Activated B cell treated with CpG ODN at 0.5 μM for 24 hours (primary cell): ENCODE measurements at regions of chr1 and their contacts with region 1.

Region 1: GRCh38 chr1:28736450-28737306 is at the start of gene YTHDF2:
- DNase-seq: peak; percentile 96
- ATAC-seq: peak; percentile 93
- H3K4me3 Mint-ChIP-seq: peak within 1 kb of the TSS; percentile 96
- H3K27ac Mint-ChIP-seq: peak within 1 kb of the TSS; percentile 91
- H3K4me1 Mint-ChIP-seq: peaks cover 30% of the 10 kb centered on the region
- H3K27me3 Mint-ChIP-seq: no peaks in the 10 kb centered on the region
- CTCF ChIP-seq: peak; percentile 83
- total RNA-seq, gene YTHDF2: 70.6 and 81.2 TPM in 2 replicates

Region 2: GRCh38 chr1:28369371-28370238 is 367.1 kb before region 1 on chr1 and contains the start of gene PHACTR4:
- CTCF ChIA-PET with region 1: no interaction called
- POLR2A ChIA-PET with region 1: no interaction called
- intact Hi-C with region 1: loop called (anchors 1 kb)
- DNase-seq: peak; percentile 74
- ATAC-seq: peak; percentile 89
- H3K4me3 Mint-ChIP-seq: peak within 1 kb of the TSS; percentile 96
- H3K27ac Mint-ChIP-seq: peak within 1 kb of the TSS; percentile 98
- H3K4me1 Mint-ChIP-seq: peaks cover 21% of the 10 kb centered on the region
- H3K27me3 Mint-ChIP-seq: no peaks in the 10 kb centered on the region
- CTCF ChIP-seq: no peak
- total RNA-seq, gene PHACTR4: 27.2 and 31.5 TPM in 2 replicates

Region 3: GRCh38 chr1:28668191-28668955 is 68.3 kb before region 1 on chr1 and contains the start of gene GMEB1:
- CTCF ChIA-PET with region 1: interaction called, 12 read pairs
- POLR2A ChIA-PET with region 1: interaction called, 63 read pairs
- intact Hi-C with region 1: loop called (anchors 1 kb)
- DNase-seq: peak; percentile 73
- ATAC-seq: peak; percentile 65
- H3K4me3 Mint-ChIP-seq: peak within 1 kb of the TSS; percentile 92
- H3K27ac Mint-ChIP-seq: peak within 1 kb of the TSS; percentile 97
- H3K4me1 Mint-ChIP-seq: peaks cover 17% of the 10 kb centered on the region
- H3K27me3 Mint-ChIP-seq: no peaks in the 10 kb centered on the region
- CTCF ChIP-seq: no peak
- total RNA-seq, gene GMEB1: 26.8 and 27.4 TPM in 2 replicates

Region 4: GRCh38 chr1:28775121-28775944 is 38.7 kb after region 1 on chr1:
- CTCF ChIA-PET with region 1: no interaction called
- POLR2A ChIA-PET with region 1: interaction called, 23 read pairs
- intact Hi-C with region 1: no loop called
- DNase-seq: peak; percentile 62
- ATAC-seq: peak; percentile 95
- H3K4me3 Mint-ChIP-seq: peak overlapping the region; percentile 87
- H3K27ac Mint-ChIP-seq: peak overlapping the region; percentile 61
- H3K4me1 Mint-ChIP-seq: peaks cover 10% of the 10 kb centered on the region
- H3K27me3 Mint-ChIP-seq: no peaks in the 10 kb centered on the region
- CTCF ChIP-seq: no peak